AG04449 (cell line): ENCODE measurements at regions of chr13 and their contacts with region 1.

Region 1: GRCh38 chr13:31538067-31539042 is 201.0 kb upstream of the RXFP2 start:
- DNase-seq: no peak
- H3K4me3 ChIP-seq: no peak overlapping the region
- CTCF ChIP-seq: peak; percentile 61

Region 2: GRCh38 chr13:31431722-31432137 is 106.6 kb before region 1 on chr13:
- CTCF ChIA-PET with region 1: interaction called, 43 read pairs
- POLR2A ChIA-PET with region 1: no interaction called
- DNase-seq: no peak
- H3K4me3 ChIP-seq: no peak overlapping the region
- CTCF ChIP-seq: peak; percentile 81

Region 3: GRCh38 chr13:31556376-31556775 is 18.0 kb after region 1 on chr13:
- CTCF ChIA-PET with region 1: interaction called, 21 read pairs
- POLR2A ChIA-PET with region 1: no interaction called
- DNase-seq: peak; percentile 52
- H3K4me3 ChIP-seq: no peak overlapping the region
- CTCF ChIP-seq: no peak

Region 4: GRCh38 chr13:31733066-31733465 is 194.7 kb after region 1 on chr13:
- CTCF ChIA-PET with region 1: interaction called, 62 read pairs
- POLR2A ChIA-PET with region 1: no interaction called
- DNase-seq: no peak
- H3K4me3 ChIP-seq: no peak overlapping the region
- CTCF ChIP-seq: no peak

Region 5: DNA sequence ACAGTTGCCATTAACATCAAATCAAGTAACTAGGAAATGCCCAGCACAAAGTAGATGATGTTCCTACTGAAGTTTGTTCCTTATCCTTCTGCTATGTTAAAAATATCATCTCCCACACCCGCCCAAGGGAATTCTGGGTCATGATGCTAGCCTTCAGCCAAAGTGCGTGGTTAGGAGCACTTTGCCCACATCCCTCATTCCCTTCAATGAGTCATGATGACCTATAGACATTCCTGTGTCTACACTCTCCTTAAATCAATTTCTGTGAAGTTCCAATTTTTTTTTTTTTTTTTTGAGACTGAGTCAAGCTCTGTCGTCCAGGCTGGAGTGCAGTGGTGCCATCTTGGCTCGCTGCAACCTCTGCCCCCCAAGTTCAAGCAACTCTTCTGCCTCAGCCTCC is 218.0 kb after region 1 on chr13:
- CTCF ChIA-PET with region 1: interaction called, 12 read pairs
- POLR2A ChIA-PET with region 1: no interaction called
- DNase-seq: peak; percentile 91
- H3K4me3 ChIP-seq: no peak overlapping the region
- CTCF ChIP-seq: no peak